PC-9 (cell line): ENCODE measurements at regions of chr14 and their contacts with region 1.

Region 1: DNA sequence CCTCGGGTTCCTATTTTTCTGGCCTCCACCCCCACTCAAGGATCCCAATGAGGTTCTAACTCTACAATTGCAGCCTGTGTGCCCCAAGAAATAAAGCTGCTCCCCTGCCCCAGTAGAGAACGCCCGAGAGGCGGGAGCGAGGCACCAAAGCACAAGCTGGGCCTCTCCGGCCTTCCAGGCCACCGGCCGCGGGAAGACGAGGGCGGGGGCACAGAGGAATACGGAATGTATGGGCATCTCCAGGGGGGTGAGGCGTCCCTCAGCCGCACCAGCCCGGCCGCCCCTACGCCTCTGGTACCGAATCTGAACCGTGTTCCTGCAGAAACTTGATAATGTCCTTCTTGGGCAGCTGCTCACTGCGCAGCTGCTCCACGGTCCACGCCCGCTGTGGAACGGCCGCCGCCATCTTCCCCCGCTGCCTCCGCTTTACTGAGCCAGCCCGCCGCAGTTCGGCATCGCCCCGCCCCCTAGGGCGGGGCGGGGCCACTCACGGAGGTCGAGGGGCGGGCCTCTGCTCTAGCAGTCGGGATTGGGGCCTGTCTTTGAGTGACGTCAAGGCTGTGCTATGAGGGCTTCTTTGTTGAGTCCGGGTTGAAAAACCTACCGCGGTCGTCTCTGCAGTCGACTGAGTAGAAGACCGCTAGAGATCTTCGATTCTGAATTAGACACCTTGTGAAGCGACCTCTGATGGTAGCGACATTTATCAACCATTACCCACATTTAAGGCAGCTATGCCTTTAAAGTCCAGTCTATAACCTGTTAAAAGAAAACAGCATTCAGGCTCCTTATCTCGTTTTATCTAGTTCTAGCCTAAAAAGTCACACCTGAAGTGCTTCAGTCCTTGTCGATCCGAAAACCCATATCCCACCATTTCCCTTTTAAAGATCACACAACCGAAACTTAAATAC is at the start of gene FKBP3:
- DNase-seq: peak; percentile 91 to 98
- H3K4me3 ChIP-seq: peak within 1 kb of the TSS; percentile 94
- H3K27ac ChIP-seq: peak within 1 kb of the TSS; percentile 72
- H3K4me1 ChIP-seq: peaks cover 27% of the 10 kb centered on the region
- H3K27me3 ChIP-seq: no peaks in the 10 kb centered on the region
- CTCF ChIP-seq: peak; percentile 22; the same call in 1 of the 2 replicates
- total RNA-seq, gene FKBP3: 39.4 and 53.5 TPM in 2 replicates

Region 2: GRCh38 chr14:44961604-44962333 is 172.5 kb before region 1 on chr14 and contains the starts of genes KLHL28 and TOGARAM1:
- CTCF ChIA-PET with region 1: no interaction called
- POLR2A ChIA-PET with region 1: interaction called, 5 read pairs
- intact Hi-C with region 1: loop called (anchors 1 kb)
- DNase-seq: peak; percentile 94 to 99
- H3K4me3 ChIP-seq: peak within 1 kb of the TSS; percentile 65
- H3K27ac ChIP-seq: peak within 1 kb of the TSS; percentile 69
- H3K4me1 ChIP-seq: peaks cover 35% of the 10 kb centered on the region
- H3K27me3 ChIP-seq: no peaks in the 10 kb centered on the region
- CTCF ChIP-seq: no peak
- total RNA-seq, gene KLHL28: 10.3 and 10.5 TPM in 2 replicates
- total RNA-seq, gene TOGARAM1: 9.2 and 12.9 TPM in 2 replicates

Region 3: GRCh38 chr14:45066667-45067066 is 67.6 kb before region 1 on chr14:
- CTCF ChIA-PET with region 1: no interaction called
- POLR2A ChIA-PET with region 1: interaction called, 17 read pairs
- intact Hi-C with region 1: no loop called
- DNase-seq: no peak
- H3K4me3 ChIP-seq: no peak overlapping the region
- H3K27ac ChIP-seq: no peak overlapping the region
- H3K4me1 ChIP-seq: no peaks in the 10 kb centered on the region
- H3K27me3 ChIP-seq: no peaks in the 10 kb centered on the region
- CTCF ChIP-seq: no peak

Region 4: DNA sequence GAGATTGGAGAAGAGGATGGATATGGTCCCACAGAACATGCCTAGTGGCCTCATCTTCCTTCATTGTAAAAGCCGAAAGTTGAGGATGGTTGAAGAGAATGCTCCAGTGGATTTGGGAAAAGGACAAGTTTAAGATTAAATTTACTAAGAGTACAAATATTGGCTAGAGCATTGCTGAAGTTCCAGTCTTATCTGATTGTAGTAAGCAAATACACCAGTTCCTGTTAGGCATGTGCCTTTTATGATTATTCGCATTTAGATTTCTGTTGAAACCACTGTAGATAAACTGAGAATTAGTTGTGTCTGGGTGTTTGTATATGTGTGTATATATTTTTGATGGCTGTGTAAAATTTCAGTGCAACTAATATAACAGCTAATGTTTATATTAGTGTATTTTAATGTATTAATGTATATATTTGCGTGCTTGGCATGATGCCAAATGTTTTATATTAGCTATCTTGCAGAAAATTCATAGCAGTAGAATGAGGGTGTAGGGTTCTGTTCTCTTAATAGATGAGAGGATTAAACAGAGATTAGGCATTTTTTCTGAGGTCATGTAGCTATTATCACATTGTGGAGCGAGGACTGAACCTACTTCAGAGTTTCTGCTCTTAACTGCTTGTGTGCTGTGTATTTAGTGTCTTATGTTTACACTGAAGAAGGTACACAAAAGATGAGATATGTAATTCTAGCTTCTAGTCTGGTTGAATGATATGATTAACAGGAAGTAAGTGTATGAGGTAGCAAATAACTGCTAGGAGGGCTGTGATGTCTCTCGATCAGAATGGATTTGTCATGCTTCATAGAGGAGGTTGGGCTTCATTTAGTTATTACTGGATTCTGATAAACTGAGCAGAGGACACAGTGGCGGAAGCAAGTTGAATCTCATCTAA is 21.2 kb before region 1 on chr14:
- CTCF ChIA-PET with region 1: no interaction called
- POLR2A ChIA-PET with region 1: interaction called, 12 read pairs
- intact Hi-C with region 1: no loop called
- DNase-seq: no peak
- H3K4me3 ChIP-seq: no peak overlapping the region
- H3K27ac ChIP-seq: no peak overlapping the region
- H3K4me1 ChIP-seq: peaks cover 7% of the 10 kb centered on the region; the same call in 1 of the 2 replicates
- H3K27me3 ChIP-seq: no peaks in the 10 kb centered on the region
- CTCF ChIP-seq: no peak

Region 5: GRCh38 chr14:45253068-45253753 is 118.9 kb after region 1 on chr14 and contains the start of gene MIS18BP1:
- CTCF ChIA-PET with region 1: no interaction called
- POLR2A ChIA-PET with region 1: no interaction called
- intact Hi-C with region 1: loop called (anchors 1 kb)
- DNase-seq: peak; percentile 93 to 94
- H3K4me3 ChIP-seq: peak within 1 kb of the TSS; percentile 94
- H3K27ac ChIP-seq: peak within 1 kb of the TSS; percentile 90
- H3K4me1 ChIP-seq: peaks cover 29% of the 10 kb centered on the region
- H3K27me3 ChIP-seq: no peaks in the 10 kb centered on the region
- CTCF ChIP-seq: peak; percentile 63
- total RNA-seq, gene MIS18BP1: 41.0 and 54.4 TPM in 2 replicates